PC-3 (cell line): ENCODE measurements at regions of chr6 and their contacts with region 1.

Region 1: DNA sequence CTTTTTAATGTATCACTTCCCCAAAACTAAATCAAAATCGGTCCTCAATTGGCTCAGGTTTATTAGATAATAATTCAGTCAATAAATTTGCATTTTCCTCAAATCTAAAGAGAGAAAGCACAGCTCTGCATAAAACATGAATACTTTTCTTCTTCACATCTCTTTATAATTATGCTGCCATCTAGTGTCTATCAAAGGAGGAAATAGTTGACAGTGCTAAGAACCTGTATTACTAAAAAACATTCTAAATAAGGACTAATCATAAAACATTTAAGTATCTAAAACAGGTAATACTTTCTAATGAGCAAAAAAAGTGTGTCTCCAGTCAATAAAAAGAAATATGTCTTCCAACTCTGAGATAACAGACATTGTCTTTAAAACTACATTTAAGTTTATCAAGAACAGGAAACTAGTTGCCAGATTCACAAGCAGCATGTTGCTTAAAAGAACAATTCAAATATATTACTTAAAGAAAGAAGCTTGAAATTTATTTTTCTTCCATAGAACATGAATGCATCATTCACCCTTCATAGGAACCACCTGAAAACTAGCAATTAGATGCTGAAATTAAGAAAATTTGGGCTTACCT is 56.5 kb upstream of the DST start:
- DNase-seq: peak; percentile 73
- ATAC-seq: peak; percentile 51
- H3K4me3 ChIP-seq: no peak overlapping the region
- H3K27ac ChIP-seq: no peak overlapping the region
- H3K4me1 ChIP-seq: peaks cover 17% of the 10 kb centered on the region
- H3K27me3 ChIP-seq: no peaks in the 10 kb centered on the region
- CTCF ChIP-seq: peak; percentile 84

Region 2: GRCh38 chr6:56649053-56649769 is 49.9 kb before region 1 on chr6:
- CTCF ChIA-PET with region 1: no interaction called
- POLR2A ChIA-PET with region 1: no interaction called
- intact Hi-C with region 1: no loop called
- DNase-seq: peak; percentile 44
- ATAC-seq: no peak
- H3K4me3 ChIP-seq: no peak overlapping the region
- H3K27ac ChIP-seq: peak overlapping the region; percentile 55
- H3K4me1 ChIP-seq: peaks cover 47% of the 10 kb centered on the region
- H3K27me3 ChIP-seq: no peaks in the 10 kb centered on the region
- CTCF ChIP-seq: no peak

Region 3: DNA sequence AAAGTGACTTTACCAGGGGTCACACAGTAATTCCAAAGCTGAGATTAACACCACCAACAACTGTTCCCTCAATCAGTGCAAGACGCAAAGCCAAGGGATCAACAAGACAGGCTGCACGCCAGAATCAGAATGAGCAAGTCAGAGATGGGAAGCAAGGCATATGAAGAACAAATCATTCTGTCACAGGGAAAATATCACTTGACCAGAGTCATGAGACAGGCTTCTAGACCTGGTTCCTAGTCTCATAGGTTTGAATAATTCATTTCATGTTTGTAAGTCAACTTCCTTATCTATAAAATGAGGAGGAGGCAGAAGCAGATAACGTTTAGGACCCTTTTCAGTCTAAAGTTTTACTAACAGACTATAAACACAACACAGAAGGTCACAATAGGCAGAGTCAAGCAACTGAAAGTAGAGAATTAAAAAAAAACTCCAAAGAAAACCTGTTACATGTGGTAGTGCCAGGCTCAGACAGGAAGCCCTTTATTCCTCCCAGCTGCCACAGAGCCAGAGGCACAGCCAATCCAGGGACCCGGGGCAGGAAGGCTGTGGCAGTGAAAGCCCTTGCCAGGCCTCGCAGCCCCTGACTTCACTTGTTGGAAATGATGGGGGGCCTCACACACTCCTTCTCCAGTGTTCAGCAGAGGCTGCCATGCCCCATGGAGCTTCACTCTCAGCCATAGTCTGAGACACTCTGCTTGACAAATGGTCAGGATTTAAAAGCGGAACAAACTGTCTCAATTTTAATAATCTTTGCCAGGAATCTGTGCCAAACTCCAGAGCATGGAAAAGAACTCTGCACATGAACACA is 27.3 kb before region 1 on chr6:
- CTCF ChIA-PET with region 1: no interaction called
- POLR2A ChIA-PET with region 1: no interaction called
- intact Hi-C with region 1: loop called (anchors 1 kb)
- DNase-seq: no peak
- ATAC-seq: no peak
- H3K4me3 ChIP-seq: no peak overlapping the region
- H3K27ac ChIP-seq: no peak overlapping the region
- H3K4me1 ChIP-seq: peaks cover 21% of the 10 kb centered on the region
- H3K27me3 ChIP-seq: no peaks in the 10 kb centered on the region
- CTCF ChIP-seq: no peak

Region 4: DNA sequence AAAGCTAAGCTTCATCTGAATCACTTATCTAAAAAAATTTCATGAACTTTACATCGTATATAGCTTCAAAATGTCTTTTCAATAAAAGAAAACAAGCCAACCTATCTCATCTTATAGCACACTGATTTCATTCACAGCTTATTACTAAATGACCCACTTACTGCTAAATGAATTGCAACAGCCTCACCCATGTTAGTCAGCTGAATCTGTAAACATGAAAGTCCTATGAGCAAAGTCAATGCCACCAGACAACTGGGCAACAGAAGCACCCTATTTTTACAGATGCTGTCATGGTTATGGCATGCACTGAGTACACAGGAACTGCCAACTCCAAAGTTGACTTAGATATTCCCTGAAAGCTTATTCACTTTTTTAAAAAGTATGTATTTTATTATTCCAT is 15.3 kb before region 1 on chr6:
- CTCF ChIA-PET with region 1: no interaction called
- POLR2A ChIA-PET with region 1: no interaction called
- intact Hi-C with region 1: loop called (anchors 1 kb)
- DNase-seq: peak; percentile 96
- ATAC-seq: peak; percentile 91
- H3K4me3 ChIP-seq: peak overlapping the region; percentile 48
- H3K27ac ChIP-seq: peak overlapping the region; percentile 91
- H3K4me1 ChIP-seq: peaks cover 62% of the 10 kb centered on the region
- H3K27me3 ChIP-seq: no peaks in the 10 kb centered on the region
- CTCF ChIP-seq: no peak